ENCODE measurements at regions of chr2 and their contacts with region 1.

Region 1: DNA sequence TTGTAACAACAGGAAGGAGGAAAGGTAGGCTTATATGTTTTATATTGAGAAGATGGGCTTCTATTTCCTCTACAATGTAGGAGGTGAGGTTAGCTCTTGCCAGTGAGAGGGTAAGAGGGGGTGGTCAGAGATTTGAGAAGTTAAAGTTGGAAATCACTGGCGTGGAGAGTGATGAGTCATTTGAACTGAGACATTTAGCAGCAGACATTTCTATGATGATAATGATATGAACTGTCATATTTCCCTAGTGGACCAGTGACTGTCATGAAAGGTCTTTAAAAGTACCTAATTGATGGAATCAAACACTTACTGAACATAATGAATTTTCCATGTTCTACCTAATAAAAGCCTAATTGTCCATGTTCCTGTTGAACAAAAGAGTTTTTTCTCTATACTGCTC is 126.1 kb downstream of the FAM161A start:
- DNase-seq: no peak
- ATAC-seq: peak; percentile 73
- H3K4me3 Mint-ChIP-seq: no peak overlapping the region
- H3K27ac Mint-ChIP-seq: no peak overlapping the region
- H3K4me1 Mint-ChIP-seq: peaks cover 3% of the 10 kb centered on the region
- H3K27me3 Mint-ChIP-seq: peaks cover 5% of the 10 kb centered on the region
- CTCF ChIP-seq: no peak

Region 2: DNA sequence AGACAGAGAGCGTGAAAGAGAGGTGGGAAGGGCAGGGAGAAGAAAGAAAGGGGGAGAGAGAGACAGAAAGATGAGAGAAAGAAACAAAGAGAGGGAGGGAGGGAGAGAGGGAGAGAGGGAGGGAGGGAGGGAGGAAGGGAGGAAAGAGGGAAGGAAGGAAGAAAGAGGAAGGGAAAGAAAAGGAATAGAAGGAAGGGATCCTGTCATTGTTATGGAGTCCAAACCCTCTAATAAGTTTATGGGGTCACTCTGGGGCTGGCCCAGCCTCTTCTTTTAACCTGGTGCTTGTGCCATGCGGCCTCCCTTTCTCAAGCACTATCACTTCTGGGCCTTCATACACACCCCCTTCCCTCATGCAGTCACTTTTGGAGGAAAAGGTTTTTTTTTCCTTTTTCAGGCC is 67.7 kb after region 1 on chr2:
- CTCF ChIA-PET with region 1: no interaction called
- POLR2A ChIA-PET with region 1: interaction called, 13 read pairs
- intact Hi-C with region 1: no loop called
- DNase-seq: no peak
- ATAC-seq: no peak
- H3K4me3 Mint-ChIP-seq: no peak overlapping the region
- H3K27ac Mint-ChIP-seq: no peak overlapping the region
- H3K4me1 Mint-ChIP-seq: peaks cover 5% of the 10 kb centered on the region
- H3K27me3 Mint-ChIP-seq: peaks cover 15% of the 10 kb centered on the region
- CTCF ChIP-seq: no peak

Measured in activated B cell treated with CpG ODN at 0.5 μM for 24 hours (primary cell).